H1 (cell line): ENCODE measurements at regions of chr10 and their contacts with region 1.

Region 1: GRCh38 chr10:69092959-69093850 is 5.3 kb downstream of the SRGN start:
- DNase-seq: peak in 1 of 2 experiments; percentile 84
- H3K4me3 ChIP-seq: no peak overlapping the region
- H3K27ac ChIP-seq: no peak overlapping the region
- H3K4me1 ChIP-seq: no peaks in the 10 kb centered on the region
- H3K27me3 ChIP-seq: no peaks in the 10 kb centered on the region
- CTCF ChIP-seq: peak in 2 of 3 experiments; percentile 72 to 73; a peak in 3 of 4 replicates
- EP300 ChIP-seq: no peak
- POLR2A ChIP-seq: no peak
- RAD21 ChIP-seq: peak; percentile 85 to 88

Region 2: DNA sequence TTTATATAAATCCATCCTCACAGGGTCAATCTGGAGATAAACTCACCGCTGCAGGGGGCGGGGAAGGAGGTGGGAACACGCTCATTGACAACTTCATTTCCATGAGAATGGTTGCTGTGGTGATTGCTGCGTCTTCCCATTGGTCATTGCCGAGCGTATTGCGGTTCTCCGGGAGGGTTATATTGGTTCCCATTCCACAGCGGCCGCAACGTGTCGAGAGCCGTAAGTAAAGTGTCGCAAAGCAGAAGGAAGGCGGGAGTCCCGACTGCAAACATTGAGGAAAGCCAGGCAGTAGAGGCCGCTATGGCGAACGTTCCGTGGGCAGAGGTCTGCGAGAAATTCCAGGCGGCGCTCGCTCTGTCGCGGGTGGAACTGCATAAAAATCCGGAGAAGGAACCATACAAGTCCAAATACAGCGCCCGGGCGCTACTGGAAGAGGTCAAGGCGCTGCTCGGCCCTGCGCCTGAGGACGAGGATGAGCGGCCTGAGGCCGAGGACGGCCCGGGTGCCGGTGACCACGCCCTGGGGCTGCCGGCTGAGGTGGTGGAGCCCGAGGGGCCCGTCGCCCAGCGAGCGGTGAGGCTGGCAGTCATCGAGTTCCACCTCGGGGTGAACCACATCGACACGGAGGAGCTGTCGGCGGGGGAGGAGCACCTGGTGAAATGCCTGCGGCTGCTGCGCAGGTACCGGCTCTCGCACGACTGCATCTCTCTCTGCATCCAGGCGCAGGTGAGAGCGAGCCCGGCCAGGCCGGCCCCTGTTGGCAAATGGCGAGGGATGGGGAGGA is 104.5 kb before region 1 on chr10 and contains the start of gene KIFBP:
- CTCF ChIA-PET with region 1: interaction called, 14 read pairs
- POLR2A ChIA-PET with region 1: interaction called, 6 read pairs
- DNase-seq: peak; percentile 89 to 93
- H3K4me3 ChIP-seq: peak within 1 kb of the TSS; percentile 51 to 99 (median 82)
- H3K27ac ChIP-seq: peak within 1 kb of the TSS; percentile 67
- H3K4me1 ChIP-seq: no peaks in the 10 kb centered on the region; a peak in 1 of 7 replicates
- H3K27me3 ChIP-seq: no peaks in the 10 kb centered on the region
- CTCF ChIP-seq: peak; percentile 44 to 58 (median 50); a peak in 3 of 4 replicates
- EP300 ChIP-seq: no peak
- POLR2A ChIP-seq: peak; percentile 82 to 93
- RAD21 ChIP-seq: peak in 1 of 2 experiments; percentile 15; a peak in 2 of 4 replicates
- total RNA-seq, gene KIFBP: 34.1 and 34.6 TPM in 2 replicates

Region 3: DNA sequence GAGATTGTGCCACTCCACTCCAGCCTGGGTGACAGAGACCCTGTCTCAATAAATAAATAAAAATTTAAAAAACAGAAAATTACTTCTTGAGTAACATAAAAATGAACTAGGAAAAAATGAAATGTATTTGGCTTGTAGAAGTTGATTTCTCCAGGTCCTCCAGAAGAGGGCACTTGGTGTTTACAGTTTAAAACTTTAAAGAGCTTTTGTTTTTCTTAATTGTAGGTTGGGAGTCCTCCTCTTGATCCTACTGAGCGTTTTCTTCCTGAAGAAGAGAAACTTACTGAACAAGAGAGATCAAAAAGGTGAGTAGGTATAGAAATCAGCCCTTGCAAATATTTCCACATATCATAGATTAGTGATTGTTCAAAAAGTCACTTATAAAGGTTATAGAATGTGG is 88.4 kb before region 1 on chr10:
- CTCF ChIA-PET with region 1: interaction called, 47 read pairs
- POLR2A ChIA-PET with region 1: interaction called, 4 read pairs
- DNase-seq: no peak
- H3K4me3 ChIP-seq: no peak overlapping the region
- H3K27ac ChIP-seq: no peak overlapping the region
- H3K4me1 ChIP-seq: no peaks in the 10 kb centered on the region
- H3K27me3 ChIP-seq: peaks cover 0 to 2% (median 0%) of the 10 kb centered on the region in 4 experiments; a peak in 1 of 7 replicates
- CTCF ChIP-seq: peak in 2 of 3 experiments; percentile 24 to 37; a peak in 2 of 4 replicates
- EP300 ChIP-seq: no peak
- POLR2A ChIP-seq: no peak
- RAD21 ChIP-seq: peak; percentile 52 to 61; a peak in 3 of 4 replicates

Region 4: GRCh38 chr10:69014171-69014570 is 79.0 kb before region 1 on chr10:
- CTCF ChIA-PET with region 1: interaction called, 12 read pairs
- POLR2A ChIA-PET with region 1: no interaction called
- DNase-seq: no peak
- H3K4me3 ChIP-seq: no peak overlapping the region
- H3K27ac ChIP-seq: no peak overlapping the region
- H3K4me1 ChIP-seq: no peaks in the 10 kb centered on the region
- H3K27me3 ChIP-seq: peaks cover 0 to 1% (median 0%) of the 10 kb centered on the region in 4 experiments; a peak in 1 of 7 replicates
- CTCF ChIP-seq: no peak
- EP300 ChIP-seq: no peak
- POLR2A ChIP-seq: no peak
- RAD21 ChIP-seq: no peak

Region 5: DNA sequence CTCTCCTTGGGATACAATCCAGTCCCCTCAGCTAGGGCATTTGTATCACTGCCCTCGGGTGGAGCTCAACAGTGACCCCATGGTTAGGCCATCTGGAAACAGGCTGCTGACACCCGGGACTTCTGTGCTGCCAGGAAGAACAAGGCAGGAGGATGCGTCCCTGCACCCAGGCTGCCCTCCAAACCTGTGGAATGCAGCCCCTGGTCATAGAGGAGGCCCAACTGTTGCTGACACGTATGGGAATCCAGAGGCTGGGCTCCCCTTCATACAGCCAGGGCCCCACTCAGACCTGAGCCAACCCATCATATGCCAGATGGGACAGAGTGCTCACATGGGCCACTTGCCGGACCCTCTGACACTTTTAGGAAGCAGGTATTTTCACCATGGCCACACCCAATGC is 50.8 kb before region 1 on chr10:
- CTCF ChIA-PET with region 1: interaction called, 12 read pairs
- POLR2A ChIA-PET with region 1: no interaction called
- DNase-seq: no peak
- H3K4me3 ChIP-seq: no peak overlapping the region
- H3K27ac ChIP-seq: no peak overlapping the region
- H3K4me1 ChIP-seq: no peaks in the 10 kb centered on the region
- H3K27me3 ChIP-seq: no peaks in the 10 kb centered on the region
- CTCF ChIP-seq: no peak
- EP300 ChIP-seq: no peak
- POLR2A ChIP-seq: no peak
- RAD21 ChIP-seq: no peak

Region 6: GRCh38 chr10:69080226-69080625 is 13.0 kb before region 1 on chr10:
- CTCF ChIA-PET with region 1: interaction called, 43 read pairs
- POLR2A ChIA-PET with region 1: no interaction called
- DNase-seq: no peak
- H3K4me3 ChIP-seq: no peak overlapping the region
- H3K27ac ChIP-seq: no peak overlapping the region
- H3K4me1 ChIP-seq: no peaks in the 10 kb centered on the region
- H3K27me3 ChIP-seq: no peaks in the 10 kb centered on the region
- CTCF ChIP-seq: no peak
- EP300 ChIP-seq: no peak
- POLR2A ChIP-seq: no peak
- RAD21 ChIP-seq: no peak